ENCODE measurements at regions of chr6 and their contacts with region 1.

Region 1: GRCh38 chr6:7166410-7167305 is 58.9 kb downstream of the RREB1 start:
- DNase-seq: no peak
- H3K4me3 ChIP-seq: no peak overlapping the region
- H3K27ac ChIP-seq: peak overlapping the region; percentile 41 to 78 (median 69)
- H3K4me1 ChIP-seq: peaks cover 83 to 100% (median 94%) of the 10 kb centered on the region in 4 donors
- H3K27me3 ChIP-seq: no peaks in the 10 kb centered on the region
- CTCF ChIP-seq: no peak
- EP300 ChIP-seq: no peak
- POLR2A ChIP-seq: no peak

Region 2: DNA sequence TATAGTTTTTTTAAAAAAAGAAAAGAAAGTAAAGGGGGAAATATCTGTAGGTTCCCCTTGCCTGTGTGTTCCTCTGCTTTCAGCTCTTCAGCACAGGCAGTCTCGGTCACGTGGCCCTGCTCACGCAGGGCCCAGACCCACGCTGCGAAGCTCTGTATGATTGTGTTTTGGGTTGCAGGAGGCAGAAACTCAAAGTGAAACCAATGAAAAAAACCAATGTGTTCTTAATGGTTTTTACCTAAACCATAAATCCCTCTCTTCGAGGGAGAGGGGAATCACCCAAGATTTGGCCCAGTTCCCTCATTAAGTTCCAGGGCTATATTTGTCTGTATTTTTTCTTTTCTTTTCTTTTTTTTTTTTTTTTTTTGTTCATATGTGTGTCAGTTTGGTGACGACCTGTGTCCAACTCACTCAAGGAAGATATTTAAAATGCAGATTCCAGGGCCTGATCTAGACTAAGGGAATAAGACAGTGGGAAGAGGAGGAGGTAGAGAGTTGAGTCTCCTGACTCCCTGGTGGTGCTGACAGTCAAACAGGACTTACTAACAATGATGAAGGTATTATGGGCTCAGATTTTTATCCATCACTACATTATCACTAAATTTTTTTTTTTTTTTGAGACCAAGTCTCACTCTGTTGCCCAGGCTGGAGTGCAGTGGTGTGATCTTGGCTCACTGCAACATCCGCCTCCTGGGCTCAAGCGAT is 92.7 kb before region 1 on chr6:
- intact Hi-C with region 1: no loop called
- DNase-seq: no peak
- H3K4me3 ChIP-seq: no peak overlapping the region
- H3K27ac ChIP-seq: no peak overlapping the region
- H3K4me1 ChIP-seq: no peaks in the 10 kb centered on the region
- H3K27me3 ChIP-seq: no peaks in the 10 kb centered on the region
- CTCF ChIP-seq: no peak
- EP300 ChIP-seq: no peak
- POLR2A ChIP-seq: no peak

Region 3: DNA sequence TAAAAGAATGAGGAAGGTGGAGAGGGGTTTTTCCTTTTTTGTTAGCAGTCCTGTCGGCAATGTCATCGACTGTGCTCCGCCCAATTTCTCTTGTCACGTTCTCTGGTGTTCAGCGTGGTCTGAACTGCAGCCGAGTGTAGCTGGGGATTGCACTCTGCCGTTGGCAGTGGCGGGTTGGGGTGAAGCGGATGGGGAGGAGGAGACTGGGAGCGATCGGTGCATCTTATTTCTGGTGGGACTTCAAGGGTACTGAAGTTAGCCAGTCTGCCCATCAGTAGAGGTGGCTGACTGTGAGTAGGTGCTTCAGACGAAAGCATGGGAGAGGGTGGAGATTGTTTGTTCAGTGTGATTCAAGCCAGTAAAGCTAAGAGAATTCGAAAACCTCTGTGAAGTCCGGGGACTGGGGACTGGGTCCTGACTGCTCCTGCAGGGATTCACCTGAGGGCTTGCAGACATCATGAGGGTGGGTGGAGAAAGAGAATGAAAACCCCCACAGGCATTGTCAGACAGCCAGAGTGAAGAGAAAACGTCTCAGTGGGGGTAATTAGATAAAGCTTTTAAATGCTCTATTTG is 53.8 kb before region 1 on chr6:
- intact Hi-C with region 1: loop called (anchors 5 kb)
- DNase-seq: no peak
- H3K4me3 ChIP-seq: peak overlapping the region; percentile 6 to 25 (median 14)
- H3K27ac ChIP-seq: peak overlapping the region; percentile 4 to 99 (median 82)
- H3K4me1 ChIP-seq: peaks cover 52 to 83% (median 78%) of the 10 kb centered on the region in 4 donors
- H3K27me3 ChIP-seq: no peaks in the 10 kb centered on the region
- CTCF ChIP-seq: no peak
- EP300 ChIP-seq: no peak
- POLR2A ChIP-seq: no peak